Transverse colon (tissue), 4 donors: ENCODE measurements at regions of chr7 and their contacts with region 1.

Region 1: DNA sequence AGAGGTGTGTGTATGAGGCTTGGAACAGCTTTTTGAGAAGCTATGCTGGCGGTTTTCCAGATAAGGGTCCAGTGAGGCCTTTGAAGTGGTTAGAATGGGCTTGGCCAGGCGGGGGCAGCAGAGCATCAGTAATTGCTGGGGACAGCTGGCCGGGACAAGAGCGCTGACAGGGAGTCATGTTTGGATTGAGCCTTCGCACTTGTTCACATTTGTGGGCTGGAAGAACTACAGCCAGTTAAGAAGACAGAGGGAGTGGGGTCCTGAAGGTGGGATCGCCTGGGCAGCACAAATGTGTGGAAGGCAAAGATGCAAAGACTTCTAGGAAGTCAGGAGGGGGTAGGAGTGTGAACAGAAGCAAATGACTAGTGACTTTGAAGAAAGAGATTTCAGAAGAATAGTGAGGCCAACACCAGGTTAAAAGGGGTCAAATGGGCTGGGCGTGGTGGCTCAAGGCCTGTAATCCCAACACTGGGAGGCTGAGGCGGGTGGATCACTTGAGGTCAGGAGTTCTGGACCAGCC is 12.7 kb upstream of the SDHAF3 start:
- DNase-seq: peak; percentile 86
- H3K4me3 ChIP-seq: no peak overlapping the region
- H3K27ac ChIP-seq: no peak overlapping the region
- H3K4me1 ChIP-seq: peaks cover 0 to 5% (median 0%) of the 10 kb centered on the region in 4 donors
- H3K27me3 ChIP-seq: no peaks in the 10 kb centered on the region
- CTCF ChIP-seq: peak; percentile 65 to 77 (median 75)
- EP300 ChIP-seq: no peak
- POLR2A ChIP-seq: no peak

Region 2: GRCh38 chr7:97179454-97180104 is 74.8 kb after region 1 on chr7:
- in situ Hi-C with region 1: loop called in 2 of 4 experiments (anchors 5 kb)
- intact Hi-C with region 1: loop called (anchors 10 kb)
- DNase-seq: peak; percentile 23
- H3K4me3 ChIP-seq: no peak overlapping the region
- H3K27ac ChIP-seq: no peak overlapping the region
- H3K4me1 ChIP-seq: no peaks in the 10 kb centered on the region
- H3K27me3 ChIP-seq: no peaks in the 10 kb centered on the region
- CTCF ChIP-seq: peak; percentile 33 to 79 (median 77)
- EP300 ChIP-seq: no peak
- POLR2A ChIP-seq: no peak

Region 3: DNA sequence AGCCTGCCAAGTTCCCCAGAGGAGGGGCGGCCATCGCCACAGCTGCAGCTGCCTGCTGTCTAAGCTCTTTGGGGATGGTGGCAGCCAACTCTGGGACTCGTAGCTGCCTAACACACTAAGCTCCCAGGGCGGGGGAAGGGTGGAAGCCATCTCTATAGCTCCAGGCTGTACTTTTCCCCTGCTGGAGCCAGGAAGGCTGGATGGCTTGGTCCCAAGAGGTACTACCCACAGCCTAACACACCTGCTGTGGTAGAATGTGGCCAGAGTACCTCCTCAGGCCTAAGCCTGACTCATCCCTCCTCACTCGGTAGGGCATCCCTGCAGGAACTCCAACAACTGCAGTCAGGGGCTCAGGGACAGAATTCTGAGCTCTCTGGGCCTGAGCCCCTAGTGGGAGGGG is 475.4 kb after region 1 on chr7:
- in situ Hi-C with region 1: no loop called
- intact Hi-C with region 1: no loop called
- DNase-seq: no peak
- H3K4me3 ChIP-seq: no peak overlapping the region
- H3K27ac ChIP-seq: no peak overlapping the region
- H3K4me1 ChIP-seq: no peaks in the 10 kb centered on the region
- H3K27me3 ChIP-seq: no peaks in the 10 kb centered on the region
- CTCF ChIP-seq: no peak
- EP300 ChIP-seq: no peak
- POLR2A ChIP-seq: no peak

Region 4: GRCh38 chr7:97845622-97846203 is 740.9 kb after region 1 on chr7:
- in situ Hi-C with region 1: loop called in 2 of 4 experiments (anchors 10 to 25 kb)
- intact Hi-C with region 1: no loop called
- DNase-seq: no peak
- H3K4me3 ChIP-seq: no peak overlapping the region
- H3K27ac ChIP-seq: no peak overlapping the region
- H3K4me1 ChIP-seq: no peaks in the 10 kb centered on the region
- H3K27me3 ChIP-seq: peaks cover 2% of the 10 kb centered on the region
- CTCF ChIP-seq: peak; percentile 32 to 49 (median 42)
- EP300 ChIP-seq: no peak
- POLR2A ChIP-seq: no peak